Activated naive CD4-positive, alpha-beta T cell treated with anti-CD3 and anti-CD28 coated beads, Interleukin-2, amount 10 ng/mL, durations not matched to agents 7 days and 5 days (primary cell): ENCODE measurements at regions of chr11 and their contacts with region 1.

Region 1: DNA sequence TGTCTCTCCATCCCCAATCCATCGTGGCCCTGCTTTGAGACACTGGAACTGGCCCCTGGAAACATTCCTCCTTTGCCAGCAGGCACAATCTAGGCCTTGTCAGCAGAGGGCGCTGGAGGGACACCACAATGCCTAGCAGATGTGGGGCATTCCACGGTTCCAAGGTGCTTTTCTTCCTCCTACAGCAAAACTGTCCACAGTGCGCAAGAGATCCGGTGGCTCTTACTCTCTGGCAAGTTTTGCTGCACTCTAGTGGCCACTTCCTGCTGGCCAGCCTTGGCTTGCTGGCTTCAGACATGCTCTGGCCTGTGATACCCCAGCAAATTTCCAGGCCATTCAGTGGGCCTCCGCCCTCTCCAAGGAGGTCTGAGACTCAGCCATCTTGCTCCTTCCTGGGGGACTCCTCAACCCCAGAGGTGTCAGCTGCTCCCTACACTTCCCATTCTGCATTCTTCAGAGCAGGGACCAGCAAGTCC is 17.1 kb upstream of the RBM4B start:
- DNase-seq: peak; percentile 90
- H3K4me3 Mint-ChIP-seq: no peak overlapping the region
- H3K27ac Mint-ChIP-seq: peak overlapping the region; percentile 12
- H3K4me1 Mint-ChIP-seq: no peaks in the 10 kb centered on the region
- H3K27me3 Mint-ChIP-seq: peaks cover 8% of the 10 kb centered on the region

Region 2: GRCh38 chr11:66834501-66834845 is 139.7 kb after region 1 on chr11:
- CTCF ChIA-PET with region 1: interaction called, 47 read pairs
- DNase-seq: no peak
- H3K4me3 Mint-ChIP-seq: no peak overlapping the region
- H3K27ac Mint-ChIP-seq: peak overlapping the region; percentile 24
- H3K4me1 Mint-ChIP-seq: peaks cover 9% of the 10 kb centered on the region
- H3K27me3 Mint-ChIP-seq: no peaks in the 10 kb centered on the region

Region 3: GRCh38 chr11:66868726-66869566 is 174.2 kb after region 1 on chr11:
- CTCF ChIA-PET with region 1: interaction called, 11 read pairs
- DNase-seq: peak; percentile 91
- H3K4me3 Mint-ChIP-seq: no peak overlapping the region
- H3K27ac Mint-ChIP-seq: peak overlapping the region; percentile 20
- H3K4me1 Mint-ChIP-seq: peaks cover 17% of the 10 kb centered on the region
- H3K27me3 Mint-ChIP-seq: no peaks in the 10 kb centered on the region